Motor neuron (in vitro differentiated cells): ENCODE measurements at regions of chr2 and their contacts with region 1.

Region 1: DNA sequence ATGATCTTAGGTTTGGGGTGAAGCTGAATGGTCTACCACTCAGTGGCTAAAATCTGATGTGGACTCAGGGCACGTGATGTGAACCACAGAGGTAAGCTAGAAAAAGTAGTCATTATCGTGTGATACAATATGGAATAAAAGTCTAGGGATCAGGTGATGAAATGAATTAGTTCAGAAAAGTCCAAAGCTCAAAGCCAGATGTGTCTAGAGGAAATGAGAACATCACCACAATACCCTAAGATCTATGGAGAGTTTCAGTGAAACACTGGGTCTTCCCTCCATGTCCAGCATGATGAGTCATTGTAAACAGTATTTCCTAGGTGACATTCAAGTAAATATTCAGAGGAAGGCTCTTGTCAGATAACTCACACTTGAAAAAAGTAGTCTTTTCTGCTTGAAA is 1257.4 kb upstream of the ZEB2 start:
- ATAC-seq: peak in 4 of 8 experiments; percentile 25 to 80 (median 46)
- H3K4me3 ChIP-seq: no peak overlapping the region
- H3K27ac ChIP-seq: no peak overlapping the region
- H3K4me1 ChIP-seq: no peaks in the 10 kb centered on the region

Region 2: GRCh38 chr2:145875016-145875415 is 97.7 kb after region 1 on chr2:
- in situ Hi-C with region 1: loop called in 1 of 9 experiments (anchors 25 kb)
- ATAC-seq: no peak
- H3K4me3 ChIP-seq: no peak overlapping the region
- H3K27ac ChIP-seq: no peak overlapping the region
- H3K4me1 ChIP-seq: no peaks in the 10 kb centered on the region